Activated CD4-positive, alpha-beta T cell treated with anti-CD3 and anti-CD28 coated beads for 36 hours (primary cell): ENCODE measurements at regions of chr9 and their contacts with region 1.

Region 1: DNA sequence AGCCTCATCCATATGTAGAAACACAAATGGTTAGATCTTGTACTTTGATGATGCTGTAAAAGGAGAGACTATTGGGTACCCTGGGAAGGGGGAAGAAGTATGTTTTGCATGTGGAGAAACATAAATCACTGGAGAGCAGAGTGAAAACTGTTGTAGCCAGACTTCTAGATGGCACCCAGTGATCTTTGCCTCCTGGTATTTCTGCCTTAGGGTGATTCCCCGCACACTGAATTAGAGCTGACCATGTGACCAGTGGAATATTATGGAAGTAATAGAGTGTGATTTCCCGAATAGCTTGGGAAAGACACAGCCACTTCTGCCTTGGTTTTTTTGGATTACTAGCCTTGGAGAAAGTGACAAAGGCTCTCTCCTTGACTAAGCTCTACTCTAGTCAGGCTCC is 174.2 kb downstream of the LPAR1 start:
- DNase-seq: no peak
- ATAC-seq: no peak
- H3K4me3 Mint-ChIP-seq: no peak overlapping the region
- H3K27ac Mint-ChIP-seq: no peak overlapping the region
- H3K4me1 Mint-ChIP-seq: no peaks in the 10 kb centered on the region
- H3K27me3 Mint-ChIP-seq: peaks cover 2% of the 10 kb centered on the region

Region 2: DNA sequence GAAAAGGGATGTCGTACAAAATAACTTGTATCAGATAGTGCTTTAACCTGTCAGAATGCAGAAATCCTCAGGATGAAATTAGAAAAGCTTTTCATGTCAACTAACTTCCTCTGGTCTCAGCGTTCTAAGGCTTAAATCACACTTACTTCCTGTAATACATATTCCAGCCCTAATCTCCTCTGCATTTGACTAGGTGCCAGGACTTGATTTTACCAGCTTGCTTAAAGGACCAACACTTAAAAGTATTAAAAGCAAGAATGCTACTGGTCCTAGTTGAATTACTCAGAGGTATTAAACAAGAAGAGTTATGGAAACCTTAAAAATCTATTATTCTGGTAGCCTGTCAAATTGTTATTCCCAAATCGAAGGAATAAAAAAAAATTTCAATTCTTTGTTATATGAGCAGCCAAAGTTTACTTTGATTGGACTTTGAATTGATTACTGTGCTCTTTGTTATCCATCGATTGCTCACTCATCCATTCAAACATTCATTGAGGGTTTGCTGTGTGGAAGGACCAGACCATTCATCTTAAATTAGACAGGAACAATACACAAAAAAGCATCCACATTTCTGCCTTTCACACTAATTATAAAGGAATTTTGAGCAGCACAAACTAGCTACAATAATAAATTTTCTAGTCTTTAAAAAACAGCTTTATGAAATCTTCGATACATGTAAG is 86.7 kb before region 1 on chr9:
- CTCF ChIA-PET with region 1: no interaction called
- POLR2A ChIA-PET with region 1: no interaction called
- intact Hi-C with region 1: no loop called
- DNase-seq: no peak
- ATAC-seq: no peak
- H3K4me3 Mint-ChIP-seq: no peak overlapping the region
- H3K27ac Mint-ChIP-seq: no peak overlapping the region
- H3K4me1 Mint-ChIP-seq: no peaks in the 10 kb centered on the region
- H3K27me3 Mint-ChIP-seq: no peaks in the 10 kb centered on the region

Region 3: GRCh38 chr9:110847671-110848070 is 16.4 kb before region 1 on chr9:
- CTCF ChIA-PET with region 1: no interaction called
- POLR2A ChIA-PET with region 1: no interaction called
- intact Hi-C with region 1: loop called in 1 of 2 experiments (anchors 1 kb)
- DNase-seq: no peak
- ATAC-seq: no peak
- H3K4me3 Mint-ChIP-seq: no peak overlapping the region
- H3K27ac Mint-ChIP-seq: no peak overlapping the region
- H3K4me1 Mint-ChIP-seq: no peaks in the 10 kb centered on the region
- H3K27me3 Mint-ChIP-seq: peaks cover 3% of the 10 kb centered on the region